ENCODE measurements at regions of chr2 and their contacts with region 1.

Region 1: GRCh38 chr2:39227628-39228412 is 15.9 kb downstream of the CDKL4 start:
- DNase-seq: peak; percentile 72 to 79 (median 78)
- H3K4me3 ChIP-seq: no peak overlapping the region
- H3K4me3 Mint-ChIP-seq: peak overlapping the region; percentile 38 to 92 (median 76)
- H3K27ac ChIP-seq: no peak overlapping the region
- H3K27ac Mint-ChIP-seq: peak overlapping the region; percentile 5 to 88 (median 81)
- H3K4me1 ChIP-seq: peaks cover 15% of the 10 kb centered on the region
- H3K4me1 Mint-ChIP-seq: peaks cover 12 to 27% (median 20%) of the 10 kb centered on the region in 4 donors
- H3K27me3 ChIP-seq: no peaks in the 10 kb centered on the region
- H3K27me3 Mint-ChIP-seq: peaks cover 0 to 1% of the 10 kb centered on the region in 2 donors

Region 2: DNA sequence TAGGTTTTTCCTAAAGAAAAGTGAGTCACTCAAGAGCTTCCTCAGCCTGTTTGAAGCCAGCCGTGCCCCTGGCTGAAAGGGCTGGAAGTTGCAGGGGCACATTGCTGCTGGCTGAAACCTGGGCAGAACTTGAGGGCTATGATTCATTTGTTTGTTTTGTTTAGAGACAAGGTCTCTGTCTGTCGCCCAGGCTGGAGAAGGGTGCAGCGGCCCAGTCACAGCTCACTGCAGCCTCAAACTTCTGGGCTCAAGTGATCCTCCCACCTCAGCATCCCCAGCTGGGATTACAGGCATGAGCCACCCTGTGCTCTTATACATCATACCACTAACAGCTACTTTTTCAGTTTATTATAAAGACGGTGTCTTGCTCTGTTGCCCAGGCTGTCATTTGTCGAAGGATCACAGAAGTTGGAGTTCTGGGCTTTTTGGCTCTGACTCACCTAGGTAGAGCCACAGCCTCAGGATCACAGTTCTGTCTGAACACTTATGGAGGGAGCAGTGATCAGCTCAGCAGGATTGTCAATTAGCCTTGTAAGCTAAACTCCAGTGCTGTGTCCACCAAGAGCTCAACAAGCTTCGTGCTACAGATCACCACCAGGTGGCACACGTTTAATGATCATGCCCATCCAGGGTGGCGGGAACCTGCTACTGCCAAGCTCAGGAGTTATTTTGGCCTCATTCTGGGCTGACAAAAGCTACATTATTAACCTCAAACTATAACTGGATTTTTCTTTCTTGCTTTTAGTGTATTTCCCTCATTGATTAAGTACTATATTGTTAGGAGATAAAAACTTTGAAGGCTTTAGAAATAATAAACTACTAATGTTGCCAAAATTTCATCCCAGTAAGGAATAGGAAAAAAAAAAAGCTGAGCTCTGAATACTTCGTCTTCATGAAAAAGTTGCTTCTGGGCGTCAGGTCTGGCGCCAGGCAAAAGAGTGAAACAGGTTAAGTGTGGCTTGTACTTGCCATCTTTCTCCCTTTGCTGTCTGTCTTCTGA is 280.3 kb before region 1 on chr2:
- CTCF ChIA-PET with region 1: interaction called, 220 read pairs
- POLR2A ChIA-PET with region 1: interaction called, 6 read pairs
- intact Hi-C with region 1: loop called (anchors 1 kb)
- DNase-seq: peak; percentile 44 to 60 (median 49)
- H3K4me3 ChIP-seq: no peak overlapping the region
- H3K4me3 Mint-ChIP-seq: no peak overlapping the region
- H3K27ac ChIP-seq: no peak overlapping the region
- H3K27ac Mint-ChIP-seq: no peak overlapping the region
- H3K4me1 ChIP-seq: no peaks in the 10 kb centered on the region
- H3K4me1 Mint-ChIP-seq: no peaks in the 10 kb centered on the region
- H3K27me3 ChIP-seq: no peaks in the 10 kb centered on the region
- H3K27me3 Mint-ChIP-seq: peaks cover 0 to 2% of the 10 kb centered on the region in 2 donors

Region 3: DNA sequence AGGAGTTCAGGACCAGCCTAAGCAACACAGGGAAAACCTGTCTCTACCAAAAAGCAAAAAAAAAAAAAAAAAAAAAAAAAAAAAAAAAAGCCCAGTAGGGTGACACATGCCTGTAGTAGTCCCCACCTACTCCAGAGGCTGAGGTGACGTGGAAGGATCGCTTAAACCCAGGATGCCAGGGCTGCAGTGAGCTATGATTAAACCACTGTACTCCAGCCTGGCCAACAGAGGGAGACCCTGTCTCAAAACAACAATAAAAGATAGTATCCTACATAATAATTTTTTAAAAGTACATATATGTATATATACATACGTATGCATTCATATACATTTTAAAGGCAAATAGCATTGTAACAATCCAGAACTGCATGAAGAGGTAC is 158.7 kb before region 1 on chr2:
- CTCF ChIA-PET with region 1: interaction called, 371 read pairs
- POLR2A ChIA-PET with region 1: interaction called, 9 read pairs
- intact Hi-C with region 1: no loop called
- DNase-seq: peak in 2 of 5 donors; percentile 6 to 44
- H3K4me3 ChIP-seq: no peak overlapping the region
- H3K4me3 Mint-ChIP-seq: no peak overlapping the region
- H3K27ac ChIP-seq: no peak overlapping the region
- H3K27ac Mint-ChIP-seq: peak overlapping the region in 3 of 7 donors; percentile 41 to 71 (median 63)
- H3K4me1 ChIP-seq: peaks cover 22% of the 10 kb centered on the region
- H3K4me1 Mint-ChIP-seq: peaks cover 31 to 43% (median 36%) of the 10 kb centered on the region in 4 donors
- H3K27me3 ChIP-seq: no peaks in the 10 kb centered on the region
- H3K27me3 Mint-ChIP-seq: no peaks in the 10 kb centered on the region

Region 4: DNA sequence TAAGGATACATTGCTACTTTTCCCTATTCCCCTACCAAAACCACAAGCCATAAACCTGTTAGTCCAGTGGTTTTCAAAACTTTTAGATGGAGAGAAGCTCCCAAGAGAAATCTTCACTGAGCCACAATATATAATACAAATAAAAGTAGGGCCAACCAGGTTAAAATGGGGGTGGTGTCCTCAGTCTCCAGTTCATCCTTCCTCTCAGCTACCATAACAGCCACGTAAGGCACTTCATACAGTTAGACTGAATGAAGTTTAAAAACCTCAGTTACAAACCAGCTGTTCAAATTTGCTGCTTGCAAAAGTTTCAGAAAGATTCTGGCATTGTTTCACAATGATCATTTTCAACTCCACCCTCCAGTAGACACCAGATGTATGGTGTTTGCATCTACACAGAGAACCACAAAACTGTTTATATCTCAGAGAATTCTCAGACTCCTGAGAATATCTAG is 132.9 kb before region 1 on chr2:
- CTCF ChIA-PET with region 1: interaction called, 34 read pairs
- POLR2A ChIA-PET with region 1: no interaction called
- intact Hi-C with region 1: no loop called
- DNase-seq: no peak
- H3K4me3 ChIP-seq: no peak overlapping the region
- H3K4me3 Mint-ChIP-seq: peak overlapping the region in 7 of 8 donors; percentile 2 to 67 (median 9)
- H3K27ac ChIP-seq: no peak overlapping the region
- H3K27ac Mint-ChIP-seq: peak overlapping the region in 6 of 7 donors; percentile 1 to 60 (median 16)
- H3K4me1 ChIP-seq: peaks cover 50% of the 10 kb centered on the region
- H3K4me1 Mint-ChIP-seq: peaks cover 50 to 71% (median 60%) of the 10 kb centered on the region in 4 donors
- H3K27me3 ChIP-seq: no peaks in the 10 kb centered on the region
- H3K27me3 Mint-ChIP-seq: no peaks in the 10 kb centered on the region

Region 5: GRCh38 chr2:39135690-39136259 is 92.0 kb before region 1 on chr2:
- CTCF ChIA-PET with region 1: interaction called, 271 read pairs
- POLR2A ChIA-PET with region 1: interaction called, 5 read pairs
- intact Hi-C with region 1: no loop called
- DNase-seq: no peak
- H3K4me3 ChIP-seq: no peak overlapping the region
- H3K4me3 Mint-ChIP-seq: peak overlapping the region; percentile 57 to 85 (median 72)
- H3K27ac ChIP-seq: peak overlapping the region; percentile 25
- H3K27ac Mint-ChIP-seq: peak overlapping the region; percentile 73 to 96 (median 88)
- H3K4me1 ChIP-seq: peaks cover 65% of the 10 kb centered on the region
- H3K4me1 Mint-ChIP-seq: peaks cover 35 to 74% (median 54%) of the 10 kb centered on the region in 4 donors
- H3K27me3 ChIP-seq: no peaks in the 10 kb centered on the region
- H3K27me3 Mint-ChIP-seq: no peaks in the 10 kb centered on the region

Region 6: DNA sequence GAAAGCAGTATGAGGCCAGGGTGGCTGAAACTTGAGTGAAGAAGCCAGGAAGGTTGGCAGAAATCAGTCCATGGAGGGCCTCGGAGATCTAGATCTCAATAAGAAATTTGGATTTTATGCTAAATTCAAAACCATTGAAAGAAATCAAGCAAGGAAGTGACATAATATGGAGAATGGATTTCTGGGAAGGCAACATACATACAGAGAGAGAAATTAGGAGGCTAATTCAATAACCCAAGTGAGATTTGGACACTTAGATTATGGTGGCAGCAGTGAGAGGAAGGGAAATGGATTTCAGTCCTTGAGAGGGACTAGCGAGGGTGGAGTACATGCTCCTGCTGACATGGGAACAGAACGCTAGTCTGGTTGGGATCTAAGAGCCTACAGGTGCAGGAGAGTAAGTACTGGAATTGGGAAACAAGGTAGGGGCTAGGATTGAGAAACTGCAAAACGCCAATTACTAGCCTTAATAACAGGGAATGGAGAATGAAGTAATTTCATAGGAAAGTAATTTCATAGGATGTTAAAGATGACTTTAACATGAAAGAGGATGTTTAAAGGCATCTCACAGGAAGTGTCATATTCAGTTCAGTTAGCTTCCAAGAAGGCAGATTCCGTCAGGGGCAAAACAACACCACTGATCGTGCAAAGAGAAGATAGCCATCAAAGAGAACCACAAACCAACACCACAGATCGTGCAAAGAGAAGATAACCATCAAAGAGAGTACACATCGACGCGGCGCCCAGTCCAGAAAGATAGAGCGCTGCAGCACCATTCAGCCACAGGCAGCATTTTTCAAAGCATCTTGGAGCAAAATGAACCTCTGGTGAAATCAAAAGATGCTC is 11.3 kb before region 1 on chr2:
- CTCF ChIA-PET with region 1: interaction called, 52 read pairs
- POLR2A ChIA-PET with region 1: interaction called, 46 read pairs
- intact Hi-C with region 1: loop called (anchors 1 kb)
- DNase-seq: peak; percentile 87 to 92 (median 89)
- H3K4me3 ChIP-seq: peak overlapping the region in 1 of 2 donors; percentile 25
- H3K4me3 Mint-ChIP-seq: peak overlapping the region; percentile 36 to 72 (median 63)
- H3K27ac ChIP-seq: peak overlapping the region; percentile 65
- H3K27ac Mint-ChIP-seq: peak overlapping the region; percentile 63 to 96 (median 91)
- H3K4me1 ChIP-seq: peaks cover 58% of the 10 kb centered on the region
- H3K4me1 Mint-ChIP-seq: peaks cover 38 to 60% (median 52%) of the 10 kb centered on the region in 4 donors
- H3K27me3 ChIP-seq: no peaks in the 10 kb centered on the region
- H3K27me3 Mint-ChIP-seq: no peaks in the 10 kb centered on the region